GM12878 (cell line): ENCODE measurements at regions of chr4 and their contacts with region 1.

Region 1: GRCh38 chr4:168923526-168924194 is 86.4 kb downstream of the CBR4 start:
- DNase-seq: peak; percentile 31
- ATAC-seq: peak; percentile 91
- H3K4me3 ChIP-seq: no peak overlapping the region
- H3K27ac ChIP-seq: no peak overlapping the region
- H3K4me1 ChIP-seq: no peaks in the 10 kb centered on the region
- H3K27me3 ChIP-seq: no peaks in the 10 kb centered on the region
- CTCF ChIP-seq: peak; percentile 68 to 73 (median 69); a peak in 5 of 6 replicates
- EP300 ChIP-seq: no peak
- POLR2A ChIP-seq: no peak
- RAD21 ChIP-seq: peak; percentile 84

Region 2: DNA sequence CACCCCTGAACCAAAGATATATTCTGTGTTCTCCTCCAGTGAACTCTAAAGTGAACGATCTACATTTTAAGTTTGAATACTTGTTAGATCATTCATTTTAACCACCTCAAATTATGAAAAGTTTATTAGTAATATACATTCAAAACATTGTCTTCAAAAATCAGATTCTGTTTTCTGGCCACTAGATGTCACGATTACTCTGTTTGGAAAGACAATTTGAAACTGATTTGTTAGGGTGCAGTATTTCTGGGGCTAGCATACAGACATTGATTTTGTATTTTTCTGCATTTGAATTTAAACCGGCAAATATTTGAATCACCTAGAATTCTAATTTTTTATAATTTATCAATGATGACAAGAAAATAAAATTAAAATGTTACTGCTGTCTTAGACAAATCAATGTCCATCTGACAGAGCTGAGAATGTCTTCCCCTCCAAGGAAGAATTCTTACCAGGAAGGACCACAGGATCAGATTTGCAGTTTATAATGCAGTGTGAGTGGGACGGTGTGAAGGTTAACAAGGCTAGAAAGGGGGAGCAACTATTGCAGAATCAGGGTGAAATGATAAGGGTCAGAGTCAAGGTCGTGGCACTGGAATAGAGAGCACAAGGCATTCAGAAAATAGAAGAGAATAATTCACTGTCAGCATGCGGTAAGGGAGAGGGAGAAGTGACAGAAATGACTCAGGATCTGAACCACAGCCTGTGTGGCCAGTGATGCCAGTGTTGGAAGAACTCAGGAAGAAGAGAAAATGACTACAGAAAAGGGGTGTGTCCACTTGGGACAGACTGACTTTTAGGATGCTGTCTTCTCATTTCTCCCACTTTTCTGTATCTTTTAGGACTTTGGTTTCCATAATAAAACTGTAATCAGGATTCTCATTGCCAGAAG is 739.7 kb before region 1 on chr4:
- CTCF ChIA-PET with region 1: interaction called, 14 read pairs
- POLR2A ChIA-PET with region 1: no interaction called
- RAD21 ChIA-PET with region 1: interaction called, 12 read pairs
- SMC1A ChIA-PET with region 1: interaction called, 5 read pairs
- in situ Hi-C with region 1: loop called (anchors 5 kb)
- intact Hi-C with region 1: loop called (anchors 2 kb)
- DNase-seq: peak; percentile 12
- ATAC-seq: peak; percentile 63
- H3K4me3 ChIP-seq: no peak overlapping the region
- H3K27ac ChIP-seq: no peak overlapping the region
- H3K4me1 ChIP-seq: 0 out of 2 replicates have a peak, but pooled peaks cover 3% of the 10 kb centered on the region
- H3K27me3 ChIP-seq: no peaks in the 10 kb centered on the region
- CTCF ChIP-seq: peak; percentile 33 to 61 (median 47); a peak in 5 of 6 replicates
- EP300 ChIP-seq: no peak
- POLR2A ChIP-seq: no peak
- RAD21 ChIP-seq: peak; percentile 80

Region 3: GRCh38 chr4:168461821-168462220 is 461.8 kb before region 1 on chr4:
- CTCF ChIA-PET with region 1: no interaction called
- POLR2A ChIA-PET with region 1: no interaction called
- RAD21 ChIA-PET with region 1: no interaction called
- SMC1A ChIA-PET with region 1: no interaction called
- in situ Hi-C with region 1: no loop called
- intact Hi-C with region 1: no loop called
- DNase-seq: no peak
- ATAC-seq: no peak
- H3K4me3 ChIP-seq: no peak overlapping the region
- H3K27ac ChIP-seq: no peak overlapping the region
- H3K4me1 ChIP-seq: no peaks in the 10 kb centered on the region
- H3K27me3 ChIP-seq: no peaks in the 10 kb centered on the region
- CTCF ChIP-seq: no peak
- EP300 ChIP-seq: no peak
- POLR2A ChIP-seq: no peak
- RAD21 ChIP-seq: no peak

Region 4: DNA sequence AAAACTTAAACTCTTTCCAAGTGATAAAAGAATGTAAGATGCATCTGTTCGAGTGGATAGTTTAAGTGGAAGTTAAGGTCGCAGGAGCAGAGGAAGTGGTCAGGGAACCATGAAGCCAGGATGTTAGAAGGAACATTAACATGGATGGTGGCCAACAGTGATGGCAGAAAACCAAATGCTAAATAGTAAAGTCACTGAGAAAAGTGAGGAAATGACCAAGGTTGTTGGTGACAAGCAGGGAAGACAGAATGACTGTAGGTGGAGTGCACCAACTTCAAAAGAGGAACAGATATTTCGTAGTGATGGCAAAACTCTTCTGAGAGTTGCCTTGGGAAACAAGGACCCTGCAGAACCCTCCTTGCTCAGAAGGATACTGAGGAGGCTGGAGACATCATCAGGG is 200.6 kb before region 1 on chr4:
- CTCF ChIA-PET with region 1: interaction called, 13 read pairs
- POLR2A ChIA-PET with region 1: no interaction called
- RAD21 ChIA-PET with region 1: interaction called, 3 read pairs
- SMC1A ChIA-PET with region 1: no interaction called
- in situ Hi-C with region 1: no loop called
- intact Hi-C with region 1: no loop called
- DNase-seq: no peak
- ATAC-seq: peak; percentile 63
- H3K4me3 ChIP-seq: no peak overlapping the region
- H3K27ac ChIP-seq: no peak overlapping the region
- H3K4me1 ChIP-seq: no peaks in the 10 kb centered on the region
- H3K27me3 ChIP-seq: no peaks in the 10 kb centered on the region
- CTCF ChIP-seq: no peak; a peak in 1 of 6 replicates
- EP300 ChIP-seq: peak in 1 of 2 experiments; percentile 39; a peak in 1 of 4 replicates
- POLR2A ChIP-seq: no peak
- RAD21 ChIP-seq: no peak

Region 5: DNA sequence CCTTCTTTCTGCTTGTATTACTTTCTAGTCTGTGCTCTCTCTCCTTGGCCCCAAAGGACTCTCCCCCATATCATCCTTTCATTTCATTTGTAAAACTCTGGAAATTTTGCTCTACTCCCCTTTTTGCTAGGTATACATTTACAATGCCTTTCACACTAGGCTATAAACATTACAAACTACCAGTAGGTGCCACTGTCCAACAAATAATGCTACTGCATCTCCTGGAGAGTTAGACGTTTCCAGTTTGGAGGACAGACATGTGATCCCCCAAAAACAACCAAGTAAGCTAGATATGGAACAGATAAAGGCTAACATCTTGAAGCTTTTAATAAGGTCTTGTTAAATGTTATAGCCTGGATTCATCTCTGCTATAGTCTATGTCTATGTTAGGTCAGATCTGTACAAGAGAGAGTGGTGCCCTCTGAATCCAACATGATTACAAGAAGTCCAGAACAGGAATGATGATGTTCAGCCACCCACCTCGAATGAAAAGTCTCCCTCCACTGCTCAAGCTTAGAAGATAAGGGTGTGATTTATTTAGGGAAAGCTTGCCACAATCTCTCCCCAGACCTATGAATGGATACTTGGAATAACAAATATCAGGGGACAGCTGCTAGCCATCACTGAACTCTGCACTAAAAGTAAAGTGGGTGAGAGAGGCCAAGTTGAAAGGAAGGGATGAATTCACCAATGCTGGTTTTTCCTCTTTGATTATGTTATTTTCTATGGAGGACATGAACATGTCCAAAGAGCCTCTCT is 72.1 kb after region 1 on chr4:
- CTCF ChIA-PET with region 1: interaction called, 47 read pairs
- POLR2A ChIA-PET with region 1: no interaction called
- RAD21 ChIA-PET with region 1: interaction called, 21 read pairs
- SMC1A ChIA-PET with region 1: interaction called, 7 read pairs
- in situ Hi-C with region 1: no loop called
- intact Hi-C with region 1: no loop called
- DNase-seq: no peak
- ATAC-seq: peak; percentile 38; the same call in 1 of the 3 replicates
- H3K4me3 ChIP-seq: no peak overlapping the region
- H3K27ac ChIP-seq: no peak overlapping the region
- H3K4me1 ChIP-seq: no peaks in the 10 kb centered on the region
- H3K27me3 ChIP-seq: no peaks in the 10 kb centered on the region
- CTCF ChIP-seq: peak in 1 of 3 experiments; percentile 14; a peak in 1 of 6 replicates
- EP300 ChIP-seq: no peak
- POLR2A ChIP-seq: no peak
- RAD21 ChIP-seq: peak; percentile 38; the same call in 1 of the 2 replicates

Region 6: DNA sequence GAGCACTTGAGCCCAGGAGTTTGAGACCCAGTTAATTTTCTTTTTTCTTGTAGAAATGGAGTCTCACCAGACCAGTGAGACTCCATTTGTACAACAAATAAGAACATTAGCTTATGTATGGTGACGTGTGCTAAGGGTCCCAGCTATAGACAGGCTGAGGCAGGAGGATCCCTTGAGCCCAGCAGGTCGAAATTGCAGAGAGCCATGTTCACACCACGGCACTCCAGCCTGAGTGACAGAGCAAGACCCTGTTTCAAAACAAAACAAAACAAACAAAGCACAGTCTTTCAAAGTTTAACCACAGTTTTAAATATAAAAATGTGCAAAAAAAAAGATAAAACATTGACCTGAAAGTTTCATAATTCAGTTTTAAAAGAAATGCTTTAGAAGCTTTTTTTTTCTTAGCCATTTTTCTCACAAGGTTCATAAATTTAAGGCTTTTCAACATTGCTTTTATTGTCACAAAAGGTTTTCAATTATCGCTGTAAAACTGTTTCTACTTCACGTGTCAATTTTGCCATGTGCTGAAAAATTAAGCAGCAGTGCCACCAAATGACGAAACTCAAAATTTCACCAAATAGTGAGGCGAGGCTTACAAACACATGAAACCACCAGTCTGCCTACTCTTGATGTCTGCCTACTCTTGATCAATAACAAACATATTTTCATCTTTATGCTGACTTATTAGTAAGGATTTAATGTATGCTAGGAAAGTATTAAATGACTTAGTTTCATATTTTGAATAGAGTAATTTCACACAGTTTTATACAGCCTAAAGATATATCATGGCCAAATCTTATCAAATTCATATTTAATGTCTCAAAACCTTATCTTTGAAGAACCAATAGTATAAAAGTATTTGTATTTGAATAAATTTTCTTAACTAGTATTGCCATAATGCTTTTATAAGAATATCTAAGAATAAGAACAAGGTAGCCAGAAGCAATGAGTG is 562.4 kb after region 1 on chr4:
- CTCF ChIA-PET with region 1: interaction called, 60 read pairs
- POLR2A ChIA-PET with region 1: no interaction called
- RAD21 ChIA-PET with region 1: interaction called, 32 read pairs
- SMC1A ChIA-PET with region 1: interaction called, 53 read pairs
- in situ Hi-C with region 1: loop called (anchors 5 kb)
- intact Hi-C with region 1: loop called (anchors 1 kb)
- DNase-seq: peak; percentile 68
- ATAC-seq: peak; percentile 68
- H3K4me3 ChIP-seq: no peak overlapping the region
- H3K27ac ChIP-seq: no peak overlapping the region
- H3K4me1 ChIP-seq: 0 out of 2 replicates have a peak, but pooled peaks cover 5% of the 10 kb centered on the region
- H3K27me3 ChIP-seq: no peaks in the 10 kb centered on the region
- CTCF ChIP-seq: peak; percentile 43 to 82 (median 67); a peak in 5 of 6 replicates
- EP300 ChIP-seq: no peak
- POLR2A ChIP-seq: no peak
- RAD21 ChIP-seq: peak; percentile 97

Region 7: DNA sequence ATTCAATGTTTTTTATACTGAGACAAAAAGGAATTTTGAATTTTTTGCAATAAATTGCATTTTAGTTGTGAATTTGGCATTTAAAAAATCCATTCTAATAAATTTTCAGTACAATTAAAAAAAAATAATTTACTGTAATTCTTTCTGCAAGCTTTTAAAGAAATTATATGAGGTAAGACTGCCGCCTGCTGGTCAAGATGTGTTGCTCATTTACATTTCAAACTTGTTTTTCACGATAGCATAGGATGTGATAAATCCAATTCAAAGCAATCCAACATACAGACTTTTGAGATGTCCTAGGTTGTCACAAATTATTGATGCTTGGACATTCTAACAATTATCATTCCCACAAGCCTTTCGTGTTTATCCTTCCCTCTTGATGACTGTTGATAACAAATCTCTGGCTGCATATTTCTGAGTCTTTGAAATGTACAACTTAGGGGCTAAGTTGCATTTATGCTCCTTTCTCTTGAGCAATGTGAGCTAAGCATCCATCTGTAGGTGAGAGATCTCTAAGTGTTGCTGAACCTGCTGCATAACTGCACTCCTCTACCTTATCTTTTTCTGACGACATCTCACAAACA is 1124.2 kb after region 1 on chr4:
- CTCF ChIA-PET with region 1: no interaction called
- POLR2A ChIA-PET with region 1: no interaction called
- RAD21 ChIA-PET with region 1: no interaction called
- SMC1A ChIA-PET with region 1: no interaction called
- in situ Hi-C with region 1: loop called (anchors 10 kb)
- intact Hi-C with region 1: no loop called
- DNase-seq: no peak
- ATAC-seq: no peak; the same call in 2 of the 3 replicates
- H3K4me3 ChIP-seq: no peak overlapping the region
- H3K27ac ChIP-seq: no peak overlapping the region
- H3K4me1 ChIP-seq: no peaks in the 10 kb centered on the region
- H3K27me3 ChIP-seq: no peaks in the 10 kb centered on the region
- CTCF ChIP-seq: peak; percentile 63 to 79 (median 75)
- EP300 ChIP-seq: no peak
- POLR2A ChIP-seq: no peak
- RAD21 ChIP-seq: peak; percentile 88